ENCODE measurements at regions of chr3 and their contacts with region 1.

Region 1: DNA sequence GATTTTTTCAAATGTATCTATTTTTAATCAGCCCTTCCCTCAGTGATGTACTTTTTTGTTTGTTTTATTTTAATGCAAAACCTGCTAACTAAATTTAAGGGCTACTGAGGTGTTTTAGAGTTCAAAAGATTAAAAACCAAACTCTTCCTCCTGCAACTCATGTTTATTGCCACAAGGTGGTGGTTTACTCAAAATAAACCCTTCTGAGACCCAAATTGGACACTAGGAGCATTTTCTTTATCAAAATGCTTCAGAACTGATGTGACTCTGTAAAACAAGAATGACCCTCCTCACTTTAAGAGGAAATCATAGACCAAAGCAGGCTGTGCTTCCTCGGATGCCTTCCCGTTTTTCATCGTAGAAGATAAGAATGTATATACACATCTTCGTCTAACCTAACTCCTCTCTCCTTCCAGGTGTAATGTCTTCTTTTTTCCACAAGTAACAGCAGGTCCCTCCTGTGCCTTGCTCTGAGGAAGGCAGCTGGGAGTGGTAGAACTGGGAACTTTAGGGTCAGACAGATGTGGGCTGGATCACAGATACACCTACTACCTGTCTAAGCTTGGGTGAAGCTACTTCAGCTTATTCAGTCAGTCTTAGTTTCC is 2.9 kb upstream of the NME9 start:
- DNase-seq: no peak
- H3K4me3 ChIP-seq: no peak overlapping the region
- H3K27ac ChIP-seq: no peak overlapping the region
- H3K4me1 ChIP-seq: peaks cover 6% of the 10 kb centered on the region
- H3K27me3 ChIP-seq: no peaks in the 10 kb centered on the region
- CTCF ChIP-seq: peak; percentile 33

Region 2: DNA sequence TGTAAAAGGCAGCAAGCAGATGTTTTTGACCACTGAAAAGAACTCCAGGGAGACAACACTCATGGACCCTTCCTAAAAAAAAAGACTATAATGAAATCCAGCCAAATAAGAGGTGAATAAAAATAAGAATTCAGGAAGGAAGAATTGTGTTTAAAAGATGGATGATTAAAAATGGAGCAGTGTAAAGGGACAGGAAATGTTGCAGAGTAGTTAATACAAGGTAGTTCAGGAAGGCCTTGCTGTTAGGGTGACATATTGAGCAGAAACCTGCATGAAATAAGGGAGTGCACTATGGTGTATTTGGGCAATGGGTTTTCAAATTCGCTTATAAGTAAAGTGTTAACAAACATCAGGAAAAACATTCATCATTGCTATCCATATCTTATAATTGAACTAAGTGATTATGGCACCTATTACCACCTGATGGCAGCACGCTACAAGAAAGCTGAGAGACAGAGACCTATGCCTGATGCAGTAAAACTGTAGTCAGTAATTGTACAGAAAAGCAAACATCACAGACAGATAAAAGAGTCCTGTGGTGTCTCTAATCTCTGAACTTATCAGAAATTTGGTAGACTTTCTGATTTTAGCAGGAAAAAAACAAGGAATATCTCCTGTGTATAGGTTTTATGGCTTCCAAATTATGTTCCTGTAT is 152.1 kb before region 1 on chr3:
- intact Hi-C with region 1: loop called (anchors 5 kb)
- DNase-seq: peak; percentile 28
- H3K4me3 ChIP-seq: no peak overlapping the region
- H3K27ac ChIP-seq: no peak overlapping the region
- H3K4me1 ChIP-seq: no peaks in the 10 kb centered on the region
- H3K27me3 ChIP-seq: no peaks in the 10 kb centered on the region
- CTCF ChIP-seq: peak; percentile 12

Measured in colonic mucosa (tissue), 4 donors.